ENCODE measurements at regions of chr6 and their contacts with region 1.

Region 1: DNA sequence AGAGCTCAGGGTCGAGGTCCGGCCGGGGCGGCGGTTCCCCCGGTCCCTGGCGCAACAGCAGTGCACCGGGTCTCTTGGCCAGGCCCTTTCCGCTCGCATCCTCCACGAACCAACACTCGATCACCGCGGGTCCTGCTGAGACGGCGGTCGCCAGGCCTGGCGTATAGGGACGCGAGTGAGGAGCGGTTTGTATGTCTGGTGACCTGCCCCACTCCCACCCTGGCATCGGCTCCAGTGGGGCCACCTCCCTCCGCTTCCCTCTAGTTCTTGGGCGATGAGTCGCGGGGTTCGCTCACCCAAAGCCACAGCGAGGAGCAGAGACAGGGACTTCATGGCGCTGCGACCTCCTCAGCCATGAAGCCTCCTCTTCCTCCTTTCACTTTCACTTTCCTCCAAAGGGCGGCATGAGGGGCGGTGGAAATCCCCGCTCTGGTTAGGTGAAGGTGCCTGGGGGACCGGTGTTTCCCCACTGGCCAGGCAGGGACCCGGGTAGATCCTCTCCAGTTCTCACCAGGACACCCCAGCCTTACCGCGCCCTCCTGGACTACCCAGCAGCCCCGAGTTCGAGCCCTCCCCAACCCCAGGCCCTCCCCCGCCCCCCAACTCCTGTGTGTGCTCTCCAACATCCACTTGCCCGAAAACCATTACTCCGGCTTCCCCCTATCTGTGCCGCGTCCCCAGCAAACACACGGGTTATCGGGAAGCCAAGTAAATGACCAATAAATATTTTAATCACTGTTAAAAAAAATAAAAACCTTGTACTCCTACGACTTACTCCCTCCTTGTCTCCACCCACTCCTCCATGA is at the start of gene TAPBP:
- DNase-seq: peak; percentile 84 to 96
- ATAC-seq: peak; percentile 56 to 73 (median 68)
- H3K4me3 ChIP-seq: peak within 1 kb of the TSS; percentile 91
- H3K4me3 Mint-ChIP-seq: peak within 1 kb of the TSS; percentile 96
- H3K27ac ChIP-seq: peak within 1 kb of the TSS; percentile 98
- H3K27ac Mint-ChIP-seq: peak within 1 kb of the TSS; percentile 98 to 99
- H3K4me1 ChIP-seq: peaks cover 59% of the 10 kb centered on the region
- H3K4me1 Mint-ChIP-seq: peaks cover 40 to 74% of the 10 kb centered on the region in 2 donors
- H3K27me3 ChIP-seq: no peaks in the 10 kb centered on the region
- H3K27me3 Mint-ChIP-seq: no peaks in the 10 kb centered on the region
- CTCF ChIP-seq: no peak
- total RNA-seq, gene TAPBP: 404 to 457 (median 446) TPM

Region 2: GRCh38 chr6:33276864-33277662 is 36.8 kb before region 1 on chr6 and contains the start of gene B3GALT4:
- intact Hi-C with region 1: loop called (anchors 1 kb)
- DNase-seq: peak; percentile 68 to 86
- ATAC-seq: peak; percentile 73 to 83 (median 76)
- H3K4me3 ChIP-seq: peak within 1 kb of the TSS; percentile 82
- H3K4me3 Mint-ChIP-seq: peak within 1 kb of the TSS; percentile 94
- H3K27ac ChIP-seq: peak within 1 kb of the TSS; percentile 90
- H3K27ac Mint-ChIP-seq: peak within 1 kb of the TSS; percentile 90 to 91
- H3K4me1 ChIP-seq: peaks cover 63% of the 10 kb centered on the region
- H3K4me1 Mint-ChIP-seq: peaks cover 48 to 71% of the 10 kb centered on the region in 2 donors
- H3K27me3 ChIP-seq: no peaks in the 10 kb centered on the region
- H3K27me3 Mint-ChIP-seq: no peaks in the 10 kb centered on the region
- CTCF ChIP-seq: peak; percentile 61
- total RNA-seq, gene B3GALT4: 22.7 to 24.1 (median 23.1) TPM

Region 3: GRCh38 chr6:33299237-33299944 is 14.5 kb before region 1 on chr6:
- intact Hi-C with region 1: loop called (anchors 2 kb)
- DNase-seq: peak; percentile 91 to 97
- ATAC-seq: peak; percentile 74 to 88 (median 79)
- H3K4me3 ChIP-seq: peak overlapping the region; percentile 81
- H3K4me3 Mint-ChIP-seq: peak overlapping the region; percentile 99
- H3K27ac ChIP-seq: peak overlapping the region; percentile 88
- H3K27ac Mint-ChIP-seq: peak overlapping the region; percentile 99
- H3K4me1 ChIP-seq: peaks cover 34% of the 10 kb centered on the region
- H3K4me1 Mint-ChIP-seq: peaks cover 36 to 63% of the 10 kb centered on the region in 2 donors
- H3K27me3 ChIP-seq: no peaks in the 10 kb centered on the region
- H3K27me3 Mint-ChIP-seq: no peaks in the 10 kb centered on the region
- CTCF ChIP-seq: peak; percentile 64

Region 4: GRCh38 chr6:33417903-33418689 is 104.2 kb after region 1 on chr6 and contains the start of gene CUTA:
- intact Hi-C with region 1: loop called (anchors 2 kb)
- DNase-seq: peak; percentile 98 to 100
- ATAC-seq: peak; percentile 83 to 94 (median 84)
- H3K4me3 ChIP-seq: peak within 1 kb of the TSS; percentile 80
- H3K4me3 Mint-ChIP-seq: peak within 1 kb of the TSS; percentile 97
- H3K27ac ChIP-seq: peak within 1 kb of the TSS; percentile 95
- H3K27ac Mint-ChIP-seq: peak within 1 kb of the TSS; percentile 100
- H3K4me1 ChIP-seq: peaks cover 55% of the 10 kb centered on the region
- H3K4me1 Mint-ChIP-seq: peaks cover 55 to 72% of the 10 kb centered on the region in 2 donors
- H3K27me3 ChIP-seq: no peaks in the 10 kb centered on the region
- H3K27me3 Mint-ChIP-seq: no peaks in the 10 kb centered on the region
- CTCF ChIP-seq: no peak
- total RNA-seq, gene CUTA: 166 to 186 (median 184) TPM